ENCODE measurements at regions of chr2 and their contacts with region 1.

Region 1: DNA sequence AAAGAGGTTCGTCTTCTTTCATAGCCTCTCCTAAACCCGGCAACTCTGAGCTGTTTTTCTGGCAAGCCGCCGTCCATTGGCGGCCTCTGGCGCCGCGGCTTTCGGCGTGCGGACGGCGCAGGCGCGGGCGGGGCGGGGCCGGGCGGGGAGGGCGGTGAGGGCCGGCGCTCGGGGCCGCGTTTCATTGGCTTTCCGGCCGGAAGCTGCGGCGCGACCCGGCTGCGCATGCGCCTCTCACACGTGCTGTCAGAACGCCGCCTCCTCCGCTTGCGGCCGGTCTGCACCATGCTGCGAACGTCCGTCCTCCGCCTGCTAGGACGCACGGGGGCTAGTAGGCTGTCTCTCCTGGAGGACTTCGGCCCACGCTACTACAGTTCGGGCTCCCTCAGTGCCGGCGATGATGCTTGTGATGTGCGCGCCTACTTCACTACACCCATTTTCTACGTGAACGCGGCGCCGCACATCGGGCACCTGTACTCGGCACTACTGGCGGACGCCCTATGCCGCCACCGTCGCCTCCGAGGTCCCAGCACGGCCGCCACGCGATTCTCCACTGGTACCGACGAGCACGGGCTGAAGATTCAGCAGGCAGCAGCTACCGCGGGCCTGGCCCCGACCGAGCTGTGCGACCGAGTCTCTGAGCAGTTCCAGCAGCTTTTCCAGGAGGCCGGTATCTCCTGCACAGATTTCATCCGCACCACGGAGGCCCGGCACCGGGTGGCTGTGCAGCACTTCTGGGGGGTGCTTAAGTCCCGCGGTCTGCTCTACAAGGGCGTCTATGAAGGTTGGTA is at the start of gene MARS2:
- DNase-seq: peak; percentile 93
- ATAC-seq: peak; percentile 78
- H3K4me3 ChIP-seq: peak within 1 kb of the TSS; percentile 91
- H3K27ac ChIP-seq: peak within 1 kb of the TSS; percentile 34
- H3K4me1 ChIP-seq: peaks cover 14% of the 10 kb centered on the region
- H3K27me3 ChIP-seq: no peaks in the 10 kb centered on the region
- CTCF ChIP-seq: no peak
- total RNA-seq, gene MARS2: 7.8 and 8.3 TPM in 2 replicates

Region 2: DNA sequence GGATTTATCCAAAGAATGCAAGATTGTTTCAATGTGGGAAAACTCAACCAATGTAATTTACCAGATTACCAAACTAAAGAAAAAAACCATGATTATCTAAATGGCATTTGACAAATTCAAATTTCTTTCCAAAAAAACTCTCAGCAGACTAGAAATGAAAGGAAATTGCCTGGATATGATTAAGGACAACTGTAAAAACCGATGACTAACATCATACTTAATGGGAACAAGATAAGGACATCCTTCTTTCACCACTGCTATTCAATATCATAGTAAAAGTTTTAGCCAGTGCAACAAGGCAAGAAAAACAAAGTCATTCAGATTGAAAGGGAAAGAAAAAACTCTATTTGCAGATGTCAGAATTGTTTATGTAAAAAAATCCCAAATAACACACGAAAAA is 1070.2 kb before region 1 on chr2:
- CTCF ChIA-PET with region 1: no interaction called
- POLR2A ChIA-PET with region 1: no interaction called
- intact Hi-C with region 1: no loop called
- DNase-seq: no peak
- ATAC-seq: no peak
- H3K4me3 ChIP-seq: no peak overlapping the region
- H3K27ac ChIP-seq: no peak overlapping the region
- H3K4me1 ChIP-seq: peaks cover 3% of the 10 kb centered on the region; the same call in 1 of the 2 replicates
- H3K27me3 ChIP-seq: no peaks in the 10 kb centered on the region
- CTCF ChIP-seq: no peak

Region 3: DNA sequence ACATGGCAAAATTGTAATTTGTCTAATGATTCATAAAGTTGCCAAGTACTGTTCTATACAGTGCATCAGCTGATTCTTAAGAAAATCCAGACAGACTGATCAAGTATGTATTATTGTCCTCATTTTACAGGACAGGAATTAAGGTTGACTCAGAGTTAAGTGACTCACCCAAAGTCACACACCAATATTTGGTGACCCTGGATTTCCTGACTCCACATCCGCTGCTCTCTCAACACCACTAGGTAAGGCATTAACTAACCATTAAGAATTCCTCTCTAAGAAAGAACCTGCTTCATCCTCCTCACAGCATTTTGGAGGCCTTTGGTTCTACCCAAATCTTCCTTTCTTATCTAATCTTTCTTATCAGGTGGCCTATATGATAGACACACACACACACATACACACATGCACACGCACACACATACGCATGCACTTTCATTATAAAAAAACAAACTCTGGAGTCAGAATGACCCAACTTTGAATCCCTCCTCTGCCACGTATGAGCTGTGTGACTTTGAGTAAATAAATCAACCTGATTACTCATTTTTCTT is 545.6 kb before region 1 on chr2:
- CTCF ChIA-PET with region 1: no interaction called
- POLR2A ChIA-PET with region 1: no interaction called
- intact Hi-C with region 1: loop called (anchors 5 kb)
- DNase-seq: peak; percentile 92
- ATAC-seq: peak; percentile 89
- H3K4me3 ChIP-seq: peak overlapping the region; percentile 51
- H3K27ac ChIP-seq: peak overlapping the region; percentile 93
- H3K4me1 ChIP-seq: peaks cover 36% of the 10 kb centered on the region
- H3K27me3 ChIP-seq: no peaks in the 10 kb centered on the region
- CTCF ChIP-seq: no peak

Region 4: GRCh38 chr2:197499594-197500526 is 205.5 kb before region 1 on chr2 and contains the starts of genes HSPD1 and HSPE1:
- CTCF ChIA-PET with region 1: no interaction called
- POLR2A ChIA-PET with region 1: interaction called, 3 read pairs
- intact Hi-C with region 1: loop called (anchors 1 kb)
- DNase-seq: peak; percentile 99
- ATAC-seq: peak; percentile 81
- H3K4me3 ChIP-seq: peak within 1 kb of the TSS; percentile 89
- H3K27ac ChIP-seq: peak within 1 kb of the TSS; percentile 85
- H3K4me1 ChIP-seq: peaks cover 36% of the 10 kb centered on the region
- H3K27me3 ChIP-seq: no peaks in the 10 kb centered on the region
- CTCF ChIP-seq: no peak
- total RNA-seq, gene HSPD1: 396 and 410 TPM in 2 replicates
- total RNA-seq, gene HSPE1: 266 and 321 TPM in 2 replicates

Region 5: DNA sequence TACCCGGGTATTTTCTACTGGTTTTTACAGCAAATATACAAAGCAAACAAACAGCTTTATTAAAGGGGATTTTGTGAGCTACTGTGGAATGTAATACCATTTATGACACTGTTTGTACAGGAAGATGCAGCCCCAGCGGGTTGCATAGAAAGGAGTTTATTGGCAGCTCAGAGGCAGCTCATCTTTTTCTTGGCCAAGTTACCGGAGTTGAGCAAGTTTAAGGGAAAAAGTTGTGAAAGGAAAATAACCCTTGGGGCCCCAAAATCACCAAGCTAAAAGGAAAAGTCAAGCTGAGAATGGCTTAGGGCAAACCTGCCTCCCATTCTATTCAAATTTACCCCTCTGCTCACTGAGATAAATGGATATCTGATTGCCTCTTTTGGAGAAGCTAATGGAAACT is 128.7 kb before region 1 on chr2:
- CTCF ChIA-PET with region 1: no interaction called
- POLR2A ChIA-PET with region 1: no interaction called
- intact Hi-C with region 1: loop called (anchors 1 kb)
- DNase-seq: peak; percentile 77
- ATAC-seq: peak; percentile 94
- H3K4me3 ChIP-seq: no peak overlapping the region
- H3K27ac ChIP-seq: 0 out of 2 replicates have a peak overlapping the region, but pooled peaks have one; percentile 12
- H3K4me1 ChIP-seq: peaks cover 16% of the 10 kb centered on the region
- H3K27me3 ChIP-seq: no peaks in the 10 kb centered on the region
- CTCF ChIP-seq: no peak

Region 6: GRCh38 chr2:197677483-197677882 is 27.8 kb before region 1 on chr2:
- CTCF ChIA-PET with region 1: no interaction called
- POLR2A ChIA-PET with region 1: no interaction called
- intact Hi-C with region 1: no loop called
- DNase-seq: peak; percentile 29
- ATAC-seq: peak; percentile 87
- H3K4me3 ChIP-seq: no peak overlapping the region
- H3K27ac ChIP-seq: no peak overlapping the region
- H3K4me1 ChIP-seq: peaks cover 6% of the 10 kb centered on the region
- H3K27me3 ChIP-seq: no peaks in the 10 kb centered on the region
- CTCF ChIP-seq: no peak

Region 7: DNA sequence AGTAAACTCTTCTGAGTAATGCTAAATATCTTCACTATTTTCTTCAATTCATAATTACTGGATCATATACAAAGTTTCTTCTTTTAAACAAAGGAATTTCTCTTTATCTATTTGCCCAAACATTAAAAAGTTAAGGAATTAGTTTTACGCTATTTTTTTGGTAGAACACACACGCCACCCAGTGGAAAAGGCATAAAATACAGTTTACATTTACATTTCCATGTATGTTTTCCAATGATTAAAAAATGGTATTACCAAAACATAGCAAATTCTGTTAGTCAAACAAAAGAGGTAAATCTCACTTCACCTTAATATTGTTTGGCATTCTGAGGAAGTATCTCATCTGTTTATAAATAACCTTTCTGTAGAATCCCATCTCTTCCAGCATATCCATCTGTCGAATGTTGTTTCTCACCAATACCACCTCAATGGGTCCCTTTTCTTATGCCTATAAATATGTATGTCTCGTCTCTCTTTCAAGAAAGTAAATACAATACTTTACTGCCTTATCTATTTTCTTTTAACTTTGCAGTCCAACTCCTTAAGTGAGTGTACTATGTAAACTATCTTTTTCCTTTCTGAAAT is 72.6 kb after region 1 on chr2:
- CTCF ChIA-PET with region 1: no interaction called
- POLR2A ChIA-PET with region 1: no interaction called
- intact Hi-C with region 1: loop called (anchors 1 kb)
- DNase-seq: peak; percentile 66
- ATAC-seq: no peak
- H3K4me3 ChIP-seq: no peak overlapping the region
- H3K27ac ChIP-seq: no peak overlapping the region
- H3K4me1 ChIP-seq: no peaks in the 10 kb centered on the region
- H3K27me3 ChIP-seq: no peaks in the 10 kb centered on the region
- CTCF ChIP-seq: peak; percentile 89

Measured in PC-3 (cell line).